ENCODE measurements at regions of chr19 and their contacts with region 1.

Region 1: GRCh38 chr19:42250666-42251531 is 4.0 kb downstream of the ERF start:
- DNase-seq: no peak
- ATAC-seq: no peak
- H3K4me3 ChIP-seq: peak overlapping the region; percentile 2 to 66; a peak in 2 of 4 replicates
- H3K27ac ChIP-seq: peak overlapping the region; percentile 57; the same call in 1 of the 2 replicates
- H3K4me1 ChIP-seq: peaks cover 36% of the 10 kb centered on the region
- H3K27me3 ChIP-seq: no peaks in the 10 kb centered on the region
- CTCF ChIP-seq: no peak

Region 2: DNA sequence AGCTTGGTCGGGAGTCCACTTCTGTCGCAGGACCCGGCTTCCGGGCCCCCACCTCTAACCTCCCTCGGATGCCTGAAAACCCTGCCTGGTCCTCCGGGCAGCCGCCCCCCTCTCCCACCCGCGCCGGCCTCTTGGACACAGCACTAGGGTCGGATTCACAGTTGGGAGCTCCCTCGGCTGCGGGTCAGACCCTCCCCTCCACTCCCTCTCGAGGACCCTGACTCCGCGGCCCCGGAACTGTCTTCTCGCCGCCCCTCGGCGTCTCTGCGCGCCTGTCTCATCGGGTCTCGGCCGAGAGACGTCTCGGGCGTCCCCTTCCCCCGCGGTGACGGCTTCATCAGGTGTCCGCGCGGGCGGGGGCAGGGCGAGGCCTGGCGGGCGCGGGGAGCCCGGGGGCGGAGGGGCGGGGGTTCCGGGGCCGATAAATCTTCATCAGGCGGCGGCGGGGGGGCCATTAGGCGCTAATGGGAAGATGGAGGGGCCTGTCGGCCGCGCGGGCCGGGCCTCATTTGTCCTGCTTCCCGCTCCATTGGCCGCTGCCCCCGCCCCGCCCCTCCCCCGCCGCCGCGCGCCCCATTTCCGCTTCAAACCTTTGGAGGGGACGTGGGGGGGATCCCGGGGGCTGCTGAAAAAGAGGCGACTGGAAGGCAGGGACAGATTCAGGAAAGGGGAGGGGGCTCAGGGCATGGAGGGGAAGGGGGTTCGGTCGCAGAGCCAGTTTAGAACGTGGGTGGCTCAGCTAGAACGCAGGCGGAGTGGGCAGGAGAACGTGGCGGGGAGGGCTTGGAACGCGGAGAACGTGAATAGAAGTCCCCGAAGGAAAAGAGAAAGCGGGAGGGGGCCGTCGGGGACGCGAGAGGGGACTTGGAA is 310.8 kb before region 1 on chr19:
- CTCF ChIA-PET with region 1: no interaction called
- POLR2A ChIA-PET with region 1: no interaction called
- in situ Hi-C with region 1: no loop called
- intact Hi-C with region 1: no loop called
- DNase-seq: no peak
- ATAC-seq: peak; percentile 56; the same call in 1 of the 2 replicates
- H3K4me3 ChIP-seq: peak overlapping the region; percentile 39 to 48
- H3K27ac ChIP-seq: no peak overlapping the region
- H3K4me1 ChIP-seq: no peaks in the 10 kb centered on the region
- H3K27me3 ChIP-seq: no peaks in the 10 kb centered on the region
- CTCF ChIP-seq: no peak

Region 3: DNA sequence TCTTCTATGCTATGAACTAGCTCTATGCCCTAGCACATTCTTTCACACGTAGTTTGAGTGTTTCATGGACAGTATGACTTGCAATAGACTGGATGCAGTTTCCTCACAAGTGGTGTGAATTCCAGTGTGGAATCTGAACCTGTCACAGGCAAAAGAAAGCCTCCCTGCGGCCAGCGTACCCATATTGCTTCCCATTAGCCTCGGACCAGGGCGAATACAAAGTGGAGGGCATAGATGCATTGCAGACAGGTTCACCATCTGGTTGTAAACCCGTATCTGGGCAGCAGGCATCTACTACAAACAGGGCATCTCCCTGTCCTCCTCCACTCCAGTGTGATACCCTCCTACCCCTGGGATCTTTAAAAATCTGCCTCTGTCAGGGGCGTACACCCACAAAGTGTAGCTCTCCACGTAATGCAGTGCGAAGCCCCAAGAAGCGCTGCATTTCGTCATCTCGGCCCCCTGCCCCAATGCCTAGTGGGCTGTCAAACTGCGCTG is 16.8 kb after region 1 on chr19:
- CTCF ChIA-PET with region 1: interaction called, 12 read pairs
- POLR2A ChIA-PET with region 1: no interaction called
- in situ Hi-C with region 1: no loop called
- intact Hi-C with region 1: no loop called
- DNase-seq: no peak
- ATAC-seq: no peak
- H3K4me3 ChIP-seq: peak overlapping the region; percentile 69 to 79
- H3K27ac ChIP-seq: peak overlapping the region; percentile 93
- H3K4me1 ChIP-seq: peaks cover 11% of the 10 kb centered on the region
- H3K27me3 ChIP-seq: no peaks in the 10 kb centered on the region
- CTCF ChIP-seq: no peak

Region 4: DNA sequence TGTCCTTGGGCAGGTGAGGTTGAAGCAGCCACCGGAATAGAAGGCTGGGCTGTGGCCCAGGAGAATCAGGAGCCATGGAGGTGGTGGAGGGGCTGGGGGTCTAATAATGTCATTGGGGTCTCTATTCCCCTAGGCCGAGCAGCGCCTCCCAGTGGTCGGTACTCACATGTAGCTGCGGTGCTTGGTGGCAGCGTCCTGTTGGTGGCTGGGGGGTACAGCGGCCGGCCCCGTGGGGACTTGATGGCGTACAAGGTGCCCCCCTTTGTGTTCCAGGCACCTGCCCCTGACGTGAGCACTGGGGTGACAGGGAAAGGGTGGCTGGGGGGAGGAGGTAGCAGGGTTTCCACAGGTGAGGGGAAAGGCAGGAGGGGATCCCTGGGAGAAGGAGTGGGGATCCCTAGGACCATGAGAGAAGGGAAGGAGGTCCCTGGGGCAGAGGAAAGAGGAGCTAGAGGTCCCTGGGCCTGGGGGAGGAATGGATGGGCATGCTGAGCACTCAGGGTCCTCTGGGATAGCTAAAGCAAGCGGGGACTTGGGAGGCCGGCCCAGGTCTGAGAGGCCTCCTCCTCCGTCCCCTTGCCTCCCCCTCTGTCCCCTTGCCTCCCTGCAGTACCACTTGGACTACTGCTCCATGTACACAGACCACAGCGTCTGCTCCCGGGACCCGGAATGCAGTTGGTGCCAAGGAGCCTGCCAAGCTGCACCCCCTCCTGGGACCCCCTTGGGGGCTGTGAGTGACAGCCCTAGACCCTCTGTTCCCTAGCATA is 92.6 kb after region 1 on chr19:
- CTCF ChIA-PET with region 1: no interaction called
- POLR2A ChIA-PET with region 1: interaction called, 13 read pairs
- in situ Hi-C with region 1: no loop called
- intact Hi-C with region 1: no loop called
- DNase-seq: no peak
- ATAC-seq: no peak
- H3K4me3 ChIP-seq: no peak overlapping the region
- H3K27ac ChIP-seq: no peak overlapping the region
- H3K4me1 ChIP-seq: no peaks in the 10 kb centered on the region
- H3K27me3 ChIP-seq: no peaks in the 10 kb centered on the region
- CTCF ChIP-seq: no peak

Region 5: DNA sequence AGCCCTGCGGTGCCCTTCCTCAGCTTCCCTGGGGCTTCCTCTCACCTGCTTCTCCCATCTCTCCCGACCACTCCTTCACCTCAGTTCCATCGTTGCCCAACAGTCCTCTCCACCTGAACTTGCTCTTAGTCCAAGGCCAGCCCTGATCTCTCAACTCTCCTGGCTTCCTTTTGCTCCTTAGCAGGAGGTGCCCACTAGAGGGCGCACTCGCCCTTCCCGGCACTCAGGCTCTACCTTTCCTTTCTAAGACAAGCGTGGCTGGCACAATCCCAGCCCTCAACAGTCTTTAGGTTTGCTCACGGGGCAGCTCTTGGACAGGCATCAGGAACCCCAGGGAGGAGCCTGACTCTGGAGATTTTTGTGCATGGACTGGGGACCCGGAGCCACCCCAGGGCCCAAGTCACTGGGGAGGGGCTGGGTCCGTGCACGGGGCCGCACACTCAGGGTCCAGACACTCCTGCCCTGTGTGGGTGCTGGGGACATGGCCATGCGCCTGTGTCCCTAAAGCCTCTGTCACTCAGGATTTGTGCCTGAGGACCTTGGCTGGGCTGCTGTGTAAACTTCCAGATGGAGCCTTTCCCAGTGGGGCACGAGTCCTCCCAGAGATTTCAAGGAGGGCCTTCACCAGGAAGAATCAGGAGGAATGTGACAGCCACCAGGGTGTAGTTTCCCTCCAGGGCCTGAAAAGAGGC is 355.9 kb after region 1 on chr19:
- CTCF ChIA-PET with region 1: no interaction called
- POLR2A ChIA-PET with region 1: no interaction called
- in situ Hi-C with region 1: no loop called
- intact Hi-C with region 1: no loop called
- DNase-seq: peak; percentile 20
- ATAC-seq: peak; percentile 89
- H3K4me3 ChIP-seq: no peak overlapping the region
- H3K27ac ChIP-seq: no peak overlapping the region
- H3K4me1 ChIP-seq: no peaks in the 10 kb centered on the region
- H3K27me3 ChIP-seq: no peaks in the 10 kb centered on the region
- CTCF ChIP-seq: peak; percentile 85

Measured in Panc1 (cell line).